ENCODE measurements at regions of chr1 and their contacts with region 1.

Region 1: DNA sequence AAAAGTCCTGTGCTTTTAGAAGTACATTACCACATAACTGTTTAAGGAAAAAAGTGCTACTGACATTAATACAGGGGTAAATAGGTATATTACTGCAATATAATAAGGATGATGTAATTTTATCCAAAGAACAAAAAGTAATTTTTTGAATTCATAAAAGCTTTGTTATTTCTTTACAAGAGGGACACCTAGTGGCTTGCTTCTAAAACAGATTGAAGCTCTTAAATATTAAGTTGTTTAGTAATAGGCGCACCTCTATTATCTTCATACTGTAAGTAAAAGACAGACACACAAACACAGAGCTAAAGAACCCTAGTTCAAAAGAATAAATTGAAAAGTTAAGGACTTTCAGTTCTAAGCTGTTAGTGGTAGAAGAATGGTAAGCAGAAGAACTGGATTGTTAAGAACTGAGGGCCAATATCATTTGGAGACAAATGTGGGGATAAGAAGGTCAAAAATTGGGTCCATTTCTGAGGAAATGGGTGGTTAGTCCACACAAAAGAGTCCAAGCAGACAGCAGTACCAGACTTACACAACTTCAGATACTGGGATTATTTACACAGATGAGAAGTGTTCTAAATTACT is 15.4 kb downstream of the ZNHIT6 start:
- DNase-seq: no peak
- H3K4me3 ChIP-seq: no peak overlapping the region
- H3K27ac ChIP-seq: peak overlapping the region in 1 of 2 experiments; percentile 35; a peak in 1 of 4 replicates
- H3K4me1 ChIP-seq: peaks cover 6% of the 10 kb centered on the region in 2 experiments; a peak in 2 of 4 replicates
- H3K27me3 ChIP-seq: no peaks in the 10 kb centered on the region
- CTCF ChIP-seq: peak; percentile 80
- EP300 ChIP-seq: no peak
- RAD21 ChIP-seq: peak; percentile 62

Region 2: GRCh38 chr1:85344256-85344694 is 348.5 kb before region 1 on chr1:
- CTCF ChIA-PET with region 1: interaction called, 10 read pairs
- POLR2A ChIA-PET with region 1: no interaction called
- DNase-seq: peak; percentile 42
- H3K4me3 ChIP-seq: no peak overlapping the region
- H3K27ac ChIP-seq: peak overlapping the region; percentile 70 to 98; a peak in 3 of 4 replicates
- H3K4me1 ChIP-seq: peaks cover 2 to 58% of the 10 kb centered on the region in 2 experiments
- H3K27me3 ChIP-seq: no peaks in the 10 kb centered on the region
- CTCF ChIP-seq: peak; percentile 82
- EP300 ChIP-seq: no peak
- RAD21 ChIP-seq: peak; percentile 65

Region 3: DNA sequence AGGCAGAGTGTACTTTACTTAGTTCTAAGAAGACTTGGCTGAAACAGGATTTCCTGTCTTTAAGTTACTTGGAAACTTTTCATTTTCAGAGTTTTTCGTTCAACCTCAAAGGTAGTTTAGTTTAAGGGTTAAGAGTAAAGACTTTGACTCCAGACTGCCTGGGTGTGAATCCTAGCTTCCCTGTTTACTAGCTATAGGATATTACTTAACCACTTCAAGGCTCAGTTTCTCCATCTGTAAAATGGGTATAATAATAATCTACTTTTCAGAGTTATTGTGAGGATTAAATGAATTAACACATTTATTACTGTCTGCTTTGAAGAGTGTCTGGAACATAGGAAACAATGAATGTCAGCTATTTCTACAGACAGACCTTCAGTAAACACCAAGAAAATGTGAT is 14.6 kb before region 1 on chr1:
- CTCF ChIA-PET with region 1: interaction called, 15 read pairs
- POLR2A ChIA-PET with region 1: no interaction called
- DNase-seq: no peak
- H3K4me3 ChIP-seq: no peak overlapping the region
- H3K27ac ChIP-seq: no peak overlapping the region
- H3K4me1 ChIP-seq: no peaks in the 10 kb centered on the region
- H3K27me3 ChIP-seq: no peaks in the 10 kb centered on the region
- CTCF ChIP-seq: no peak
- EP300 ChIP-seq: no peak
- RAD21 ChIP-seq: no peak

Region 4: GRCh38 chr1:85707990-85708828 is 15.4 kb after region 1 on chr1 and contains the start of gene ZNHIT6:
- CTCF ChIA-PET with region 1: interaction called, 14 read pairs
- POLR2A ChIA-PET with region 1: no interaction called
- DNase-seq: peak; percentile 77
- H3K4me3 ChIP-seq: peak within 1 kb of the TSS; percentile 71 to 97
- H3K27ac ChIP-seq: peak within 1 kb of the TSS; percentile 78 to 95
- H3K4me1 ChIP-seq: peaks cover 0 to 12% of the 10 kb centered on the region in 2 experiments; a peak in 2 of 4 replicates
- H3K27me3 ChIP-seq: no peaks in the 10 kb centered on the region
- CTCF ChIP-seq: peak; percentile 40
- EP300 ChIP-seq: no peak; a peak in 1 of 4 replicates
- RAD21 ChIP-seq: peak; percentile 18; the same call in 1 of the 2 replicates
- polyA plus RNA-seq, gene ZNHIT6: 7.7 and 10.1 TPM in 2 replicates

Region 5: GRCh38 chr1:85884372-85885035 is 191.7 kb after region 1 on chr1:
- CTCF ChIA-PET with region 1: no interaction called
- POLR2A ChIA-PET with region 1: no interaction called
- DNase-seq: peak; percentile 16
- H3K4me3 ChIP-seq: no peak overlapping the region; a peak in 1 of 4 replicates
- H3K27ac ChIP-seq: no peak overlapping the region
- H3K4me1 ChIP-seq: no peaks in the 10 kb centered on the region
- H3K27me3 ChIP-seq: no peaks in the 10 kb centered on the region
- CTCF ChIP-seq: peak; percentile 55
- EP300 ChIP-seq: no peak
- RAD21 ChIP-seq: peak; percentile 42